MCF 10A (cell line): ENCODE measurements at regions of chr22 and their contacts with region 1.

Region 1: DNA sequence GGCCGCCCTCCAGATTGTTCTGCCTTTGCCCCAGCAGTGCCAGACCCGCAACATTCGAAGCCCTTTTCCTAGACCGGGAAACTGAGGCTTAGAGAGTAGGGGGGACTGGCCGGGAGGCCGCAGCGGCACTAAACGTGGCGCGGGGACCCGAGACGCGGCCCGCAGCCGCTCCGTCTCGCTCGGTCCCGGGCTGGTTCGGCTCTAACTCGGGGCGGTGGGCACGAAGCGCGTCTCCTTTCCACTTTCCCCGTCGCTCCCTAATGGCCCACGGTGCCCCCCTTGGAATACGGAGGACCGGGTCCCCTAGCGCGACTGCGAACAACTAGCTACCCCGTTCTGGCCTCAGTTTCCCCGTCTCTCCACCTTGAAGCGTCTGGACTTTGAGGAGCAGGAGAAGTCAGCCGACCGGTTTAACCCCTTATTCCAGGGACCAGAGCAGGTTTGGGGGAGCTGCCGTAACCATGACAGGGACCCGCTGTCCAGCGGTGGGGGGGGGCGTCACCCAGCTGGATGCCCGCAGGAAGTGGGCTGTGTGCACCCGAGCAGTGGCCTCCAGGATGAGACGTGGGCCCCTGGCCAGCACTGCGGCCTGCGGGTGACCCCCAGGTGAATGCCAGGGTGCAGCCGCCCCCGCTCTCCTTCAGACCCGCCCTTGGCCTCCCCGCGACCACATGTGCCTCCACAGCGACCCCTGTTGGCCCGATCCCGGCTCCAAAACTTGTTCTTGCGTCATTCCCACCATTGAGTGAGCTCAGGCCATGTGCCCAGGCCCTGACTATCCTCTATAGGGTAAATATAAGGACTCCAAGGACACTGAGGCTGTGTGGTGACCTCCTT is 1.1 kb downstream of the CDC42EP1 start:
- DNase-seq: peak; percentile 95
- H3K4me3 Mint-ChIP-seq: peak overlapping the region; percentile 81
- H3K27ac Mint-ChIP-seq: peak overlapping the region; percentile 71
- H3K4me1 Mint-ChIP-seq: peaks cover 26% of the 10 kb centered on the region
- H3K27me3 Mint-ChIP-seq: no peaks in the 10 kb centered on the region
- CTCF ChIP-seq: peak; percentile 86

Region 2: GRCh38 chr22:37544955-37545699 is 16.3 kb before region 1 on chr22:
- CTCF ChIA-PET with region 1: interaction called, 667 read pairs
- POLR2A ChIA-PET with region 1: interaction called, 194 read pairs
- intact Hi-C with region 1: loop called (anchors 1 kb)
- DNase-seq: peak; percentile 91
- H3K4me3 Mint-ChIP-seq: peak overlapping the region; percentile 50
- H3K27ac Mint-ChIP-seq: peak overlapping the region; percentile 78
- H3K4me1 Mint-ChIP-seq: peaks cover 28% of the 10 kb centered on the region
- H3K27me3 Mint-ChIP-seq: no peaks in the 10 kb centered on the region
- CTCF ChIP-seq: peak; percentile 79